ENCODE measurements at regions of chr12 and their contacts with region 1.

Region 1: GRCh38 chr12:67698672-67699581 is 50.4 kb downstream of the DYRK2 start:
- DNase-seq: no peak
- H3K4me3 ChIP-seq: peak overlapping the region; percentile 24 to 53 (median 25)
- H3K27ac ChIP-seq: peak overlapping the region in 1 of 2 donors; percentile 10
- H3K4me1 ChIP-seq: no peaks in the 10 kb centered on the region
- H3K27me3 ChIP-seq: no peaks in the 10 kb centered on the region
- CTCF ChIP-seq: no peak
- POLR2A ChIP-seq: no peak

Region 2: GRCh38 chr12:68915055-68915454 is 1216.1 kb after region 1 on chr12:
- intact Hi-C with region 1: loop called (anchors 10 kb)
- DNase-seq: no peak
- H3K4me3 ChIP-seq: no peak overlapping the region
- H3K27ac ChIP-seq: peak overlapping the region in 1 of 2 donors; percentile 10
- H3K4me1 ChIP-seq: no peaks in the 10 kb centered on the region
- H3K27me3 ChIP-seq: no peaks in the 10 kb centered on the region
- CTCF ChIP-seq: no peak
- POLR2A ChIP-seq: no peak

Measured in breast epithelium (tissue), 4 donors.